ENCODE measurements at regions of chr5 and their contacts with region 1.

Region 1: DNA sequence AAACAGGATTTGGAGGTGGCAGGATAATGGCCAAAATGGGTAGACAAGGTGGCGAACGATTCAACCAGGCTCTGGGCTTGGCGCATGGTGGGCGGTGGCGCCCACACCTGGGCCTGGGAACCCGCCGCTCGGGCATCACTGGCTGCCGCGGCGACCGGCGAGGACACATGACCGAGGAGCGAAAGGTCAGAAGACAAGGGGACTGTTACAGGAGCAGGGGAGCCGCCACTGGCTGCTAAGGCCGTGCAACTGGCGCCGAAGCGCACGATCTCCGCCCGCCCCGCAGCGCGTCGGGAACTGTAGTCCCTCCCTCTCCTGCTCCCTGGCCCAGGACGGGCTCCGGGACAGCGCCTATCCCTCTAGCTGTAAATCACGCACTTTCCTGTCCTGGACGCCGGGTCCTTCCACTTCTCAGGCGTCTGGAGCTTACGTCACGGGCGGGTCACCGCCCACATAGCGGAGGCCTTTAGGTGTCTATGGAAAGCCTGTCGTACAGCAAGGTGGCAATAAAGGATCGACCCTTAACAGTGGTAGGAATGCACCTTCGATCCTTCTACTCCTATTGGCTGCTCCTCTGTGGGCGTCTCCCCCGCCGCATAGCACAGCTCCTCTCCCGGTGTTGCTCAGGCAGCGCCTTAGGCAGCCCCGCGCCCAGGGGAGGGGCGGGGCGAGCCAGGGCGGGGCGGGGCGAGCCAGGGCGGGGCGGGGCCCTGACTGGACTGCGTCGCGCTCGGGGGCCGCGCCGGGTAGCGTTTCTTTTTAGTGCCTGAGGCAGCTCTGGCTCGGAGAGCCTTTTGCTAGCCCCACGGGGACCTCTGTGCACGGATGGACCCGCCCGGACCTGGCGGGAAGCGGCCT is at the start of gene ICE1:
- DNase-seq: peak; percentile 97
- ATAC-seq: peak; percentile 98
- H3K4me3 ChIP-seq: peak within 1 kb of the TSS; percentile 86 to 94 (median 91)
- H3K27ac ChIP-seq: peak within 1 kb of the TSS; percentile 96
- H3K4me1 ChIP-seq: peaks cover 71% of the 10 kb centered on the region
- H3K27me3 ChIP-seq: no peaks in the 10 kb centered on the region
- CTCF ChIP-seq: peak; percentile 36
- EP300 ChIP-seq: no peak; a peak in 1 of 4 replicates
- POLR2A ChIP-seq: peak; percentile 77 to 82
- RAD21 ChIP-seq: no peak
- total RNA-seq, gene ICE1: 27.6 and 35.2 TPM in 2 replicates

Region 2: DNA sequence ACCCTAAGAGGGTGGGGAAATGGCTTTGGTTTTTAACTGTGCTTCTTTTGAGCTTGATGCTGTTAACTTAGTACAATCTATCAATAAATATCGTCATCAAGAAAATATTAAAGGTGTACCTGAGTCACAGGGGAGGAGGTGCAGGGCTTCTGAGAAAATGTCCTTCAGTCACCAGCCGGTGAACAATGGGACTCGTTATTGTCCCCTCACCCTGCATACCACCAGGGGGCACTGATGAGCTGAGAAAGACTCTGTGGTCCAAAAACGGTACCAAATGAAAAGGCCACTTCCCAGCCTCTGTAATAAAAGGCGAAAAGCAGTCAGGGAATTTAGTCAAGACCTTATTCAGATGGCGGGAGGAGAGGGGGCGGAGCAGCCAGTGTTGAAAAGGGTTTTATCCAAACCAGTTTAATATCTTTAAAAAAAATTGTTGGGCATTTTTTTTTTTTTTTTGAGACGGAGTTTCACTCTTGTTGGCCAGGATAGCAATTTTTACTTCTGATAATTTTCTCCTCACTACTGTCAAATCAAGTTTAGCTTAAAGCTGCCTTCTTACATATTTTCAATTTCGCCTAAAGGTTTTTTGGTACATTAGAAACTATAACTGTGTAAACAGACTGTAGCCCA is 554.0 kb before region 1 on chr5:
- CTCF ChIA-PET with region 1: interaction called, 15 read pairs
- POLR2A ChIA-PET with region 1: no interaction called
- in situ Hi-C with region 1: no loop called
- intact Hi-C with region 1: no loop called
- DNase-seq: peak; percentile 42
- ATAC-seq: peak; percentile 87
- H3K4me3 ChIP-seq: no peak overlapping the region
- H3K27ac ChIP-seq: no peak overlapping the region
- H3K4me1 ChIP-seq: no peaks in the 10 kb centered on the region
- H3K27me3 ChIP-seq: peaks cover 0 to 14% of the 10 kb centered on the region in 2 experiments; a peak in 3 of 5 replicates
- CTCF ChIP-seq: peak; percentile 76
- EP300 ChIP-seq: no peak
- POLR2A ChIP-seq: no peak
- RAD21 ChIP-seq: 0 out of 2 replicates have a peak, but pooled peaks have one; percentile 44

Region 3: GRCh38 chr5:4879693-4880303 is 542.4 kb before region 1 on chr5:
- CTCF ChIA-PET with region 1: interaction called, 15 read pairs
- POLR2A ChIA-PET with region 1: no interaction called
- in situ Hi-C with region 1: loop called (anchors 5 kb)
- intact Hi-C with region 1: loop called (anchors 1 kb)
- DNase-seq: peak; percentile 44
- ATAC-seq: peak; percentile 95
- H3K4me3 ChIP-seq: no peak overlapping the region
- H3K27ac ChIP-seq: no peak overlapping the region
- H3K4me1 ChIP-seq: no peaks in the 10 kb centered on the region
- H3K27me3 ChIP-seq: peaks cover 3 to 19% of the 10 kb centered on the region in 2 experiments; a peak in 3 of 5 replicates
- CTCF ChIP-seq: peak; percentile 94
- EP300 ChIP-seq: no peak
- POLR2A ChIP-seq: no peak
- RAD21 ChIP-seq: peak; percentile 81

Region 4: DNA sequence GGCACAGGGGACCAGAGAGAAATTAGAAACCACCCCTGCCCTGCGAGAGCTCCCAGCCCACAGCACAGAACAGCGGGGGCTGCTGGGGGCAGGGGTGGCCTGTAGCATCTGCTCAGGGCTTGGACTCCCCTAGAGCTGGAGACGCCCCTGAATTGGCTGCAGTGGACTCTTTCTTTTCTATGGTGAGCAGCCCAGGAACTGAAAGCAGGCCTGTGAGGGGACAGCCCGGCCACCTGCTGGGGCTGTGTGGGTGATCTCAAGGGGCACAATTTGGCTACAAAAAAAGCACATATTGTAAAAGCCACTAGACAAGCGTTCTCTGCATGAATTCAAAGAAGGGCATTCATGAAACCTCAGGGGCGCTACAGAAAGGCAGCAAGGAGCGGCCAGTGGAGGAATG is 57.3 kb before region 1 on chr5:
- CTCF ChIA-PET with region 1: no interaction called
- POLR2A ChIA-PET with region 1: interaction called, 3 read pairs
- in situ Hi-C with region 1: no loop called
- intact Hi-C with region 1: loop called (anchors 5 kb)
- DNase-seq: no peak
- ATAC-seq: no peak
- H3K4me3 ChIP-seq: no peak overlapping the region
- H3K27ac ChIP-seq: no peak overlapping the region
- H3K4me1 ChIP-seq: peaks cover 50% of the 10 kb centered on the region
- H3K27me3 ChIP-seq: no peaks in the 10 kb centered on the region
- CTCF ChIP-seq: no peak
- EP300 ChIP-seq: no peak
- POLR2A ChIP-seq: no peak
- RAD21 ChIP-seq: no peak

Region 5: DNA sequence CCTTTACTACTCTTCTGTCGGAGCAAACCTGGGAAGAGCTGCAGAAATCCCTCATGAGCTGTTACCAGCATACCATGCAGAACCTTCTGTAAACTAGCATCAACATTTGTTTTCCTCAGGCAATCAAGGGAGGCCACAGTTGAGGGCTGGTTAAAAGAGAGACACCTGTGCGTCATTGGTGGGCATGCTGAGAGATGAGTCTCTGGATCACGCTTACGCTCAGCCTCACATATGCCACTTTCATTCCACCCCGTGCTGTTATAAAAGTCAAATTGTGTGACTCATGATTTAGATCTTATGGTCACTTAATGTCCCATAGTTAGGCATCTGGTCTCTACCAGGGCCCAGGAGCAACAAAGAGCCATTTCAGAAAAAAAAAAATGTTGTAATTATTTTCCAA is 17.8 kb before region 1 on chr5:
- CTCF ChIA-PET with region 1: no interaction called
- POLR2A ChIA-PET with region 1: no interaction called
- in situ Hi-C with region 1: no loop called
- intact Hi-C with region 1: no loop called
- DNase-seq: no peak
- ATAC-seq: no peak
- H3K4me3 ChIP-seq: no peak overlapping the region
- H3K27ac ChIP-seq: no peak overlapping the region
- H3K4me1 ChIP-seq: no peaks in the 10 kb centered on the region
- H3K27me3 ChIP-seq: no peaks in the 10 kb centered on the region
- CTCF ChIP-seq: no peak
- EP300 ChIP-seq: no peak
- POLR2A ChIP-seq: no peak
- RAD21 ChIP-seq: no peak

Measured in HepG2 (cell line).